ENCODE measurements at regions of chr7 and their contacts with region 1.

Region 1: DNA sequence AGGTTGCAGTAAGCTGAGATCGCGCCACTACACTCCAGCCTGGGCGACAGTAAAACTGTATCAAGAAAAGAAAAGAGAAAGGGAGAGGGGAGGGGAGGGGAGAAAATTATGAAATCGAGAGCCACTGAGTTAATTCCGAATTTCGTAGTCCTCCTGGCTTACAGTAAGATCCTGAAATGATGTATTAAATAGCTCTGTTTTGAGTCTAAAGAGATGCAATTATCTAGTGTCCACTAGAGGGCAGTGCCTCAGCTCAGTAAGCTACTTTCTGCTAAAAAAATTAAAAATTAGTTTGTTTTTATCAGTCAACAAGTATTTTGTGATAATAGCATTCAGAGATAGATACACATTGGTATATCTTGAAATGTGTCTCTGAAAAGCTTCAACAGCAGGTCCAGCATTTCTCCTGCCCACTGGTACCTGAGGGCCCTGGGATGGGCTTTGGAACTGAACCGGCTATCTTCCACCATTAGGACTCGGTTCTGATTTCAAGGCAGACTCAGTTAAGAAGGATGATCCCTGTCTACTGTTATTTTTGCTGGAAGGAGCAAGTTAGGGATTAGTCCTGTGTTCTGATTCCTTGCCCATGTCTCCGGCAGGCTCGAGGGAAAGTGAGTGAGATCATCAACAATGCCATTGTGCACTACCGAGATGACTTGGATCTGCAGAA is 19.5 kb downstream of the TSPAN33 start:
- DNase-seq: peak; percentile 62 to 66
- ATAC-seq: peak in 1 of 2 experiments; percentile 77; a peak in 3 of 6 replicates
- H3K4me3 ChIP-seq: no peak overlapping the region
- H3K27ac ChIP-seq: no peak overlapping the region
- H3K4me1 ChIP-seq: no peaks in the 10 kb centered on the region
- CTCF ChIP-seq: peak; percentile 89
- EP300 ChIP-seq: no peak
- POLR2A ChIP-seq: no peak
- RAD21 ChIP-seq: peak; percentile 59 to 60; a peak in 4 of 5 replicates

Region 2: GRCh38 chr7:129144095-129144833 is 19.7 kb before region 1 on chr7 and contains the start of gene TSPAN33:
- CTCF ChIA-PET with region 1: interaction called, 37 read pairs
- POLR2A ChIA-PET with region 1: no interaction called
- DNase-seq: peak; percentile 67 to 98
- ATAC-seq: peak; percentile 97 to 99
- H3K4me3 ChIP-seq: peak within 1 kb of the TSS; percentile 75
- H3K27ac ChIP-seq: peak within 1 kb of the TSS; percentile 66 to 87
- H3K4me1 ChIP-seq: peaks cover 7% of the 10 kb centered on the region; the same call in 2 of the 3 replicates
- CTCF ChIP-seq: no peak
- EP300 ChIP-seq: no peak
- POLR2A ChIP-seq: 0 out of 2 replicates have a peak, but pooled peaks have one; percentile 10
- RAD21 ChIP-seq: no peak
- polyA plus RNA-seq, gene TSPAN33: 9.1 and 12.3 TPM in 2 replicates

Region 3: DNA sequence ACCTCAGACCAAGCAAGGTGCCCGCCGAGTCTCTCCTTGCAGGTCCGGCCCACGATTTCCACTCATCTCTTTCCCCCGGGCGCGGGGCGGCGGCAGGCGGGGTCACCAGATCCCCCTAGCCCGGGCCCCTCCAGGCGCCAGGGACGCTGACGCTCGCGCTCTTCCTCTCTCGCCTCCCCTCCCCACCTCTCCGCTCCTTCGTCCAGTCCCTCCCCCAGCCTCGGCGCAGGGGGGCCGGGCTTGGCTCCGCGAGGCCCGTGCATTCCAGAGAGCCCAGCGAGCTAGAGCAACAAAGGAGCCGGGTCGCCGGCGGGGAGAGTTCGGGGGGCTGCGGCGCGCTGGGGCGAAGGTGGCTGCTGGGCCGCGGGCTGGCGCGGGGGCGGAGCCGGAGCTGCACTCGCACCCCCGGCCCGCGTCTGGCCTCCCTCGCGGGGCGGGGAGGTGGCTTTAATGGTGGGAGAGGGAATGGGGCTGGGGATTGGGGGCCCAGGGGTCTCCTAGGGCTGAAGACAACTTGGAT is 24.4 kb after region 1 on chr7 and contains the start of gene SMO:
- CTCF ChIA-PET with region 1: interaction called, 12 read pairs
- POLR2A ChIA-PET with region 1: interaction called, 6 read pairs
- DNase-seq: peak; percentile 31 to 53
- ATAC-seq: peak; percentile 64 to 86
- H3K4me3 ChIP-seq: peak within 1 kb of the TSS; percentile 87
- H3K27ac ChIP-seq: peak within 1 kb of the TSS; percentile 88 to 97
- H3K4me1 ChIP-seq: peaks cover 12% of the 10 kb centered on the region
- CTCF ChIP-seq: no peak
- EP300 ChIP-seq: no peak
- POLR2A ChIP-seq: peak; percentile 58
- RAD21 ChIP-seq: no peak
- polyA plus RNA-seq, gene SMO: 11.8 and 16.2 TPM in 2 replicates

Region 4: DNA sequence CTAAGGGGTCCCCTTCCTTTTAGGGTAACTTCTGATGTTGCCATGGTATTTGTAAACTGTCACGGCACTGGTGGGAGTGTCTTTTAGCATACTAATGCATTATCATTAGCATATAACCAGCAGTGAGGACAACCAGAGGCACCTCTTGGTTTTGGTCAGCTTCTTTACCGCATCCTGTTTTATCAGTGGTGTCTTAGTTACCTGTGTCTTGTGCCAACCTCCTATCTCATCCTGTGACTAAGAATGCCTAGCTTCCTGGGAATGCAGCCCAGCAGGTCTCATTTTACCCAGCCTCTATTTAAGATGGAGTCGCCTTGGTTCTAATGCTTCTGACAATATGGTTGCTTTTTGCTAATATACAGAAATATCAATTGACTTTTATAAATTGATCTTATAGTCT is 115.8 kb after region 1 on chr7:
- CTCF ChIA-PET with region 1: no interaction called
- POLR2A ChIA-PET with region 1: no interaction called
- DNase-seq: no peak
- ATAC-seq: no peak
- H3K4me3 ChIP-seq: no peak overlapping the region
- H3K27ac ChIP-seq: no peak overlapping the region
- H3K4me1 ChIP-seq: no peaks in the 10 kb centered on the region
- CTCF ChIP-seq: no peak
- EP300 ChIP-seq: no peak
- POLR2A ChIP-seq: no peak
- RAD21 ChIP-seq: no peak

Measured in A549 (cell line).